ENCODE measurements at regions of chr17 and their contacts with region 1.

Region 1: DNA sequence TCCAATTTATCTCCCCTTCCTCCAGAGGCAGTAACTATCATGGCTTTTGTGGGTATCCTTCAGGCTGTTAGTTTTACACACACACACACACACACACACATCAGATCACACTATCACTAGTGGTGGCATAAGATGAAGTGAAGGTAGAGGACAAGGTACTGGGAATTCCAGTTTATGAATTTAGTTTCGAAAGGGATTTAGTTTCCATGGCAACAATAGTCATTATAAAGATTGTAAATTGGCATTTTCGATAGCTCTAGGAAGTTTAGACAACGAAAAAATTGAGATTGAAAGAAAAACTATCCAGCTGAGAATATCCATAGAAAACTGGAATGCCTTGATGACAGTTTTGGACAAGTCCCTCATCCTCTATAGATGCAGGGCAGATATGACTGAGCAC is 30.8 kb downstream of the SLFN5 start:
- DNase-seq: no peak
- H3K4me3 ChIP-seq: no peak overlapping the region
- H3K27ac ChIP-seq: no peak overlapping the region
- H3K4me1 ChIP-seq: no peaks in the 10 kb centered on the region
- H3K27me3 ChIP-seq: no peaks in the 10 kb centered on the region
- CTCF ChIP-seq: no peak
- POLR2A ChIP-seq: no peak

Region 2: GRCh38 chr17:34299961-34300577 is 973.6 kb before region 1 on chr17:
- intact Hi-C with region 1: loop called (anchors 10 kb)
- DNase-seq: no peak
- H3K4me3 ChIP-seq: no peak overlapping the region
- H3K27ac ChIP-seq: peak overlapping the region; percentile 30
- H3K4me1 ChIP-seq: peaks cover 25% of the 10 kb centered on the region
- H3K27me3 ChIP-seq: no peaks in the 10 kb centered on the region
- CTCF ChIP-seq: no peak
- POLR2A ChIP-seq: no peak

Measured in vagina (tissue), 2 donors.